Activated naive CD4-positive, alpha-beta T cell treated with anti-CD3 and anti-CD28 coated beads for 36 hours (primary cell): ENCODE measurements at regions of chr7 and their contacts with region 1.

Region 1: DNA sequence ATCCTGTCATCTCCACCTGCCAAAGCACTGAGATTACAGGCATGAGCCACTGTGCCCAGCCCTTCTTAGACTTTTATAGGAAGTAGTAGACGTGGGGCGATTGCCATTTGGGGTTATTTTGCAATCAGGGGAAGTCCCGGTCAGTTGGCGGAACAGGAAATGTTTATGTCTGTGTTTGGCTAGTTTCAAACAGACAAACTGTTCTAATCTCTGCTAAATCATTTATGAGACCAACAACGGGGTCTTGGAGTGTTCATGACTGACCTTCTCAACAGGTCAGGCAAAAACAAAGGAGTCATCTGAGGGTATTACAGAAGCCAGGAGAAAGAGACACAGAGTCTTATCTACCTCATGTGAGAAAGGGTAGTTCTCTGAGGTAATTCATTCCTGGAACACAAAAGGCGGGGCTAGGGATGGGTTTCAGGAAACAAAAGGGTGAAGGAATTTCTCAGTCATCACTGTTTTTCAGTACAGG is 6.6 kb upstream of the TPK1 start:
- DNase-seq: peak; percentile 69
- H3K4me3 Mint-ChIP-seq: peak overlapping the region; percentile 15
- H3K27ac Mint-ChIP-seq: peak overlapping the region; percentile 89
- H3K4me1 Mint-ChIP-seq: peaks cover 24% of the 10 kb centered on the region
- H3K27me3 Mint-ChIP-seq: no peaks in the 10 kb centered on the region

Region 2: DNA sequence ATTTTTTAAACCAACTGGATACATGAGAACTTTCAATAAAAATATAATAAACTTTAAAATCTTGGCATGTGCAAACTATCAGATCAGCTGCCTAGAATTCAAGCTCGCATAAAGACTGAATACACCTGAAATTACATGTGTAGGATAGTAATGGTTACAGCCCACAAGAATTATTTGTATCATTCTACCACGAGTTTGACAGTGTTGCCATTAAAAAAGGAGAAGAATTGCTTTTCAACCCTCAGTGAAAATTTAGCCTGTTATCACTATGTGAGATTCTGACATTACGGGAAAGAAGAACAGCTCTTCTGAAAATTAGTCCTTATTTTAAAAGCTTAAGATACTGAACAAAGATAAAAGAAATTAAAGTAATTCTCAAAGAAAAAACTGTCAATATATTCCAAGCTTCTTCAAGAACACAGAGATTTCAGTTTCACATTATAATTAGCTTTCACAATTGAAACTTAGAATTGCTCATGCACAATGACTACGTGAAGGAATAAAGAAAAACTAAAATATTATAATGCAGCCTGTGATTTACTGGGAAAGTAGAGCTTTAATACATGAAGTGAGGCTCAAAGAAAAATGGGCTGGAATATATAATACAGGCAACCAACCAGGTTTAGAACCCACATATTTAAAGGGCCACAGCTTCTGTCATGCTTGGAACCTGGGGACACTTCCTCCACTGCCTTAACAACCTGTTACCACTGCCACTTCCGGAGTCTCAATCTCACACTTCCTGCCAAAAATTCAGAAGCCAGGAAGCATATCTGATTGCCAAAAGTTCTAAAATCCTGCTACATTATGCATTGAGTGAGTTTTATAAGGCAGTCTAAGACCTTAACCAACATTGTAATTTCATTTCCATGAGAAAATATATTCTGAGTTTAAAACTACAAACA is 29.8 kb before region 1 on chr7:
- CTCF ChIA-PET with region 1: no interaction called
- intact Hi-C with region 1: loop called (anchors 1 kb)
- DNase-seq: peak; percentile 70
- H3K4me3 Mint-ChIP-seq: peak overlapping the region; percentile 72
- H3K27ac Mint-ChIP-seq: peak overlapping the region; percentile 95
- H3K4me1 Mint-ChIP-seq: peaks cover 61% of the 10 kb centered on the region
- H3K27me3 Mint-ChIP-seq: no peaks in the 10 kb centered on the region

Region 3: DNA sequence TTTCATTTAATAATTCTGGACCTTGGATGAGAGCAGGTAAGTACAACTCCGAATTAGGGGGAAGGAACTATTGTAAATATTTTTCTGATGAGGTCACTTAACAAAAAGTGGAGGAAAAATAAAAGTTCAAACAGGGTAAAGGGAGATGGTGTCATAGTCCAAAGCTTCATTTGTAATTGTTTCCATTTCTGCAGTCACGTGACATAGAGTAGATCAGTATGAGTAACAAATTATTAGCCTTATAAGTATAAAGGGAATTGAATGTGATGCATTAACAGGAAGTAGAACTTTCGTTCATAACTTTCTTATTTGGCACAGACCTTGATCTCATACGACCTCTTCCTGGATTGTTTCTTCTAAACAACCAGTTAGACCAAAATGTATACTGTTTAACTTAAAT is 340.7 kb after region 1 on chr7:
- CTCF ChIA-PET with region 1: no interaction called
- intact Hi-C with region 1: no loop called
- DNase-seq: no peak
- H3K4me3 Mint-ChIP-seq: no peak overlapping the region
- H3K27ac Mint-ChIP-seq: no peak overlapping the region
- H3K4me1 Mint-ChIP-seq: no peaks in the 10 kb centered on the region
- H3K27me3 Mint-ChIP-seq: peaks cover 7% of the 10 kb centered on the region